Psoas muscle (tissue), 8 donors: ENCODE measurements at regions of chr2 and their contacts with region 1.

Region 1: DNA sequence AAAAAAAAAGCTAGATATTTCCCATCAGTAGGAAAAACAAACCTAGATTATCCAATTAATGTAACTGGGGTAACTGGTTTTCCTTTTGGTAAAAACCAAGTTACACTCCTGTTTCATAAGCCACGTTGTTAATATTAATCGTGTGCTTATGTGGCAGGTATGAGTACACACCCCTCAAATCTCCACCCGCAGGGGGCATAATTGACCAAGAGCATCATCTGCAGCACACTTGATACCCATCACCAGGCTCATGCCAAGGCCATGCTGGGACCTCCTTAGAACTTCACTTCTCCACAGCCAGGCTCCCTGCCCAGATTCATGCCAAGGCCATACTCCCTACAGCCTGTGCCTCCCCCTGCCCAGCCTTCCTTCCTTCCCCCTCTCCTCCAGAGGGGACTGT is 41.9 kb downstream of the MBOAT2 start:
- DNase-seq: no peak
- ATAC-seq: no peak
- H3K4me3 ChIP-seq: no peak overlapping the region
- H3K27ac ChIP-seq: no peak overlapping the region
- H3K4me1 ChIP-seq: no peaks in the 10 kb centered on the region
- H3K27me3 ChIP-seq: peaks cover 0 to 2% (median 0%) of the 10 kb centered on the region in 3 donors
- CTCF ChIP-seq: no peak

Region 2: GRCh38 chr2:8934338-8934737 is 27.3 kb before region 1 on chr2:
- intact Hi-C with region 1: loop called in 1 of 2 experiments (anchors 1 kb)
- DNase-seq: no peak
- ATAC-seq: no peak
- H3K4me3 ChIP-seq: no peak overlapping the region
- H3K27ac ChIP-seq: no peak overlapping the region
- H3K4me1 ChIP-seq: no peaks in the 10 kb centered on the region
- H3K27me3 ChIP-seq: no peaks in the 10 kb centered on the region
- CTCF ChIP-seq: no peak

Region 3: GRCh38 chr2:9165625-9166024 is 204.0 kb after region 1 on chr2:
- intact Hi-C with region 1: no loop called
- DNase-seq: no peak
- ATAC-seq: no peak
- H3K4me3 ChIP-seq: no peak overlapping the region
- H3K27ac ChIP-seq: no peak overlapping the region
- H3K4me1 ChIP-seq: no peaks in the 10 kb centered on the region
- H3K27me3 ChIP-seq: no peaks in the 10 kb centered on the region
- CTCF ChIP-seq: no peak